ENCODE measurements at regions of chr22 and their contacts with region 1.

Region 1: GRCh38 chr22:19941365-19942082 is at the starts of genes COMT and TXNRD2:
- DNase-seq: no peak
- ATAC-seq: peak; percentile 87
- H3K4me3 ChIP-seq: peak within 1 kb of the TSS; percentile 68 to 92 (median 89)
- H3K27ac ChIP-seq: peak within 1 kb of the TSS; percentile 93
- H3K4me1 ChIP-seq: peaks cover 79% of the 10 kb centered on the region
- H3K27me3 ChIP-seq: no peaks in the 10 kb centered on the region; a peak in 1 of 5 replicates
- CTCF ChIP-seq: no peak; the same call in 1 of the 2 replicates
- EP300 ChIP-seq: 0 out of 4 replicates have a peak, but pooled peaks of 1 of the 2 experiments have one; percentile 19
- POLR2A ChIP-seq: peak in 1 of 2 experiments; percentile 72; a peak in 2 of 4 replicates
- RAD21 ChIP-seq: no peak; the same call in 1 of the 2 replicates
- total RNA-seq, gene COMT: 144 and 162 TPM in 2 replicates
- total RNA-seq, gene TXNRD2: 16.4 and 18.6 TPM in 2 replicates

Region 2: GRCh38 chr22:19879695-19880506 is 61.6 kb before region 1 on chr22:
- CTCF ChIA-PET with region 1: no interaction called
- POLR2A ChIA-PET with region 1: no interaction called
- in situ Hi-C with region 1: no loop called
- intact Hi-C with region 1: loop called (anchors 2 kb)
- DNase-seq: peak; percentile 12
- ATAC-seq: no peak
- H3K4me3 ChIP-seq: no peak overlapping the region
- H3K27ac ChIP-seq: peak overlapping the region; percentile 45
- H3K4me1 ChIP-seq: peaks cover 34% of the 10 kb centered on the region
- H3K27me3 ChIP-seq: no peaks in the 10 kb centered on the region
- CTCF ChIP-seq: no peak
- EP300 ChIP-seq: no peak
- POLR2A ChIP-seq: no peak
- RAD21 ChIP-seq: no peak

Region 3: GRCh38 chr22:19891317-19892256 is 49.9 kb before region 1 on chr22:
- CTCF ChIA-PET with region 1: no interaction called
- POLR2A ChIA-PET with region 1: no interaction called
- in situ Hi-C with region 1: no loop called
- intact Hi-C with region 1: no loop called
- DNase-seq: peak; percentile 71
- ATAC-seq: peak; percentile 70
- H3K4me3 ChIP-seq: no peak overlapping the region; a peak in 1 of 6 replicates
- H3K27ac ChIP-seq: peak overlapping the region; percentile 66
- H3K4me1 ChIP-seq: peaks cover 27% of the 10 kb centered on the region
- H3K27me3 ChIP-seq: no peaks in the 10 kb centered on the region
- CTCF ChIP-seq: peak; percentile 6; the same call in 1 of the 2 replicates
- EP300 ChIP-seq: peak in 1 of 2 experiments; percentile 47; a peak in 1 of 4 replicates
- POLR2A ChIP-seq: no peak
- RAD21 ChIP-seq: no peak

Region 4: GRCh38 chr22:19955241-19956128 is 14.0 kb after region 1 on chr22:
- CTCF ChIA-PET with region 1: no interaction called
- POLR2A ChIA-PET with region 1: interaction called, 56 read pairs
- in situ Hi-C with region 1: no loop called
- intact Hi-C with region 1: no loop called
- DNase-seq: no peak
- ATAC-seq: no peak
- H3K4me3 ChIP-seq: no peak overlapping the region
- H3K27ac ChIP-seq: no peak overlapping the region
- H3K4me1 ChIP-seq: peaks cover 64% of the 10 kb centered on the region
- H3K27me3 ChIP-seq: no peaks in the 10 kb centered on the region
- CTCF ChIP-seq: no peak
- EP300 ChIP-seq: no peak
- POLR2A ChIP-seq: no peak
- RAD21 ChIP-seq: no peak

Region 5: DNA sequence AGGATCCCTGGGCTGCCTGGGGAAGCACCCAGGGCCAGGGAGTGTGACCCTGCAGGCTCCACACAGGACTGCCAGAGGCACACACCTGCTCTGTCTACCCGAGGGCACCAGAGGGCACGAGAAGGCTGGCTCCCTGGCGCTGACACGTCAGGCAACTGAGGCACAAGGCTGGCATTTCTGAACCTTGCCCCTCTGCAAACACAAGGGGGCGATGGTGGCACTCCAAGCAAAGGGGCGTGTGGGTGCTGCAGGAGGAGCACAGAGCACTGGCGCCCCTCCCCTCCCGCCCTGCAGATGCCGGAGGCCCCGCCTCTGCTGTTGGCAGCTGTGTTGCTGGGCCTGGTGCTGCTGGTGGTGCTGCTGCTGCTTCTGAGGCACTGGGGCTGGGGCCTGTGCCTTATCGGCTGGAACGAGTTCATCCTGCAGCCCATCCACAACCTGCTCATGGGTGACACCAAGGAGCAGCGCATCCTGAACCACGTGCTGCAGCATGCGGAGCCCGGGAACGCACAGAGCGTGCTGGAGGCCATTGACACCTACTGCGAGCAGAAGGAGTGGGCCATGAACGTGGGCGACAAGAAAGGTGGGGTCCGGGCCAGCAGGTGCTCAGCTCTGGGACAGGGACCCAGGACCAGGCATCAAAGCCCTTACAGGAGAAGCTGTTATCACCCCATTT is 20.8 kb after region 1 on chr22:
- CTCF ChIA-PET with region 1: no interaction called
- POLR2A ChIA-PET with region 1: interaction called, 15 read pairs
- in situ Hi-C with region 1: no loop called
- intact Hi-C with region 1: no loop called
- DNase-seq: peak; percentile 84
- ATAC-seq: peak; percentile 64
- H3K4me3 ChIP-seq: peak overlapping the region; percentile 44 to 75 (median 47); a peak in 5 of 6 replicates
- H3K27ac ChIP-seq: peak overlapping the region; percentile 99
- H3K4me1 ChIP-seq: peaks cover 75% of the 10 kb centered on the region
- H3K27me3 ChIP-seq: no peaks in the 10 kb centered on the region
- CTCF ChIP-seq: peak; percentile 96
- EP300 ChIP-seq: no peak
- POLR2A ChIP-seq: peak; percentile 28 to 67; a peak in 3 of 4 replicates
- RAD21 ChIP-seq: peak; percentile 59

Measured in HepG2 (cell line).